ENCODE measurements at regions of chr16 and their contacts with region 1.

Region 1: GRCh38 chr16:27486760-27487159 is 63.0 kb downstream of the GTF3C1 start:
- DNase-seq: no peak
- ATAC-seq: no peak

Region 2: DNA sequence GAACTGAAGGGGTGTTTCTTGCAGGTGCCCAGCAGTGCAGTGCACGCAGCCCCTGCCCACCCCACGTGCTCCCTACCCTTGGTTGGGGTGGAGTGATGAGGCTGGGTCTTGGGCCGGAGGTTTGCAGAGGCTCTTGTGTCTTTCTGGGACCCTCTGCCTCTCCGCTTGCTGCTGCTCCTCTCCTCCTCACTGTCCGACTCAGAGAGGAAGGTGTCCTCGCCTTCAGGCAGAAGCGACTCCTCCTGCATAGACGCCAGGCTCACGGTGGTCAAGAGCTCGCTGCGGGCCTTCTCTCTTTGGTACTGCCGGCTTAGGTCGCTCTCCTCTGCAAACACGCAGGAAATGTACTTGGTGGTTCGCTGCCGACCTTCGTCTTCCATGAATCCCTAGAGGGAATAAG is 20.0 kb after region 1 on chr16:
- intact Hi-C with region 1: loop called (anchors 1 kb)
- DNase-seq: no peak
- ATAC-seq: no peak

Region 3: DNA sequence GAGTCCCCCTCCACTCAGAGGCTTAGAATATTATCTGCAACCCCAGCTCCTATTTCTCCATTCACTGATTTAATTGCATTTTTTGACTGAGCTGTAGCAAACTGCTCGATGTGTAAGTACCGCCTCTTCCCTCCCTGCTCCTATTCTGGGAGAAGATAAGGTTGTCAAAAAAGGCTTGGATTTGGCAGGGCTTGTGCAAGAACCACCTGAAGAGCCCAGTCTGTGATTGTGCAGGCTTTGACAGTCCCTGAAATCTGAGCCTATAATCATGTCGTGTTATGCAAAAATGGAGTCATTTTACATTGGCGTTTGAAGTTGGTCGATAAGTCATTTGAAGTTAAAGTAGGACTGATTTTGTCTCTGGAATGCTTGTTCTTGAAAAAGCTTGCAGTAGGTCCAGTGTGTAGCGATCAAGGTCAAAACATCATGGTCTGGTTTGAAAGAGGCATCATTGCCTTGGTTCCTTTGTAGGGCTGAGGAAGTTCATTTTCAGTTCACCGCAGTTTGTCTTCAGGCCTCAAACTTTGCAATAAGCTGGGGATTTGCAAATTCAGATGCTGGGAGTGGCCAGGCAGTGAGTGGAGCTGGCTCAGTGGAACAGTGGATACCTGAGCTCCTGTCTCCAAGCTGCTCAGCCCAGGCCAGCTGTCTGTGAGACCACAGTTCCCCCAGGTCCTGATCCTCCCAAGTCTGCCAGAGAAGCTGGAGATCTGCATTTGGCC is 132.0 kb after region 1 on chr16:
- intact Hi-C with region 1: no loop called
- DNase-seq: no peak
- ATAC-seq: peak; percentile 56

Measured in sciatic nerve (tissue), 2 donors.